ENCODE measurements at regions of chr9 and their contacts with region 1.

Region 1: DNA sequence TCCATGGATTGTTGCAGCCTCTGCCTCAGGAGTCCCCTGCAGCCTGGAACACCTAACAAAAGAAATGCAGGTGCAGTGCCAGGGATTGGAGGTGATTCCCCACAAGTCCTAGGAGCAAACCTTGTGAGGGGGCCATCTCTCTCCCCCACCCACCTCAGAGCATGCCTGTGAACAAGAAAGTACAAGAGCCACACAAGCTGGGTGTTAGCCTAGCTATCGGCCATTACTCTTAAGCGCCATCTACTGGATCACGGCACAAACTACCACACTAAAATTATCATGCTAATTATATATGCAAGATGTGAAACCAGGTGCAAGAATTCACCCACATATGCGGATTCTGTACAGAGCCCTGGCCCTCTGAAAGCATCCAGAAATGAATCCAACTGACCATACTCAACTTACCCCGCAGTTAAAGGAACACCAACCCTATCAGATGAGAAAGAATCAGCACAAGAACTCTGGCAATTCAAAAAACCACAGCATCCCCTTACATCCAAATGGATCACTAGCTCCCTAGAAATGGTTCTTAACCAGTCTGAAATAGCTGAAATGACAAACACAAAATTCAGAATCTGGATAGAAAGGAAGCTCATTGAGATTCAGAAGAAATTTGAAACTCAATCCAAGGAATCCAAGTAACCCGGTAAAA is 16.5 kb upstream of the PRSS3 start:
- DNase-seq: peak; percentile 74
- CTCF ChIP-seq: peak; percentile 86

Region 2: GRCh38 chr9:33791117-33791516 is 12.3 kb after region 1 on chr9:
- CTCF ChIA-PET with region 1: interaction called, 24 read pairs
- POLR2A ChIA-PET with region 1: no interaction called
- DNase-seq: no peak
- CTCF ChIP-seq: no peak

Measured in GM10248 (cell line).